OCI-LY7 (cell line): ENCODE measurements at regions of chr1 and their contacts with region 1.

Region 1: DNA sequence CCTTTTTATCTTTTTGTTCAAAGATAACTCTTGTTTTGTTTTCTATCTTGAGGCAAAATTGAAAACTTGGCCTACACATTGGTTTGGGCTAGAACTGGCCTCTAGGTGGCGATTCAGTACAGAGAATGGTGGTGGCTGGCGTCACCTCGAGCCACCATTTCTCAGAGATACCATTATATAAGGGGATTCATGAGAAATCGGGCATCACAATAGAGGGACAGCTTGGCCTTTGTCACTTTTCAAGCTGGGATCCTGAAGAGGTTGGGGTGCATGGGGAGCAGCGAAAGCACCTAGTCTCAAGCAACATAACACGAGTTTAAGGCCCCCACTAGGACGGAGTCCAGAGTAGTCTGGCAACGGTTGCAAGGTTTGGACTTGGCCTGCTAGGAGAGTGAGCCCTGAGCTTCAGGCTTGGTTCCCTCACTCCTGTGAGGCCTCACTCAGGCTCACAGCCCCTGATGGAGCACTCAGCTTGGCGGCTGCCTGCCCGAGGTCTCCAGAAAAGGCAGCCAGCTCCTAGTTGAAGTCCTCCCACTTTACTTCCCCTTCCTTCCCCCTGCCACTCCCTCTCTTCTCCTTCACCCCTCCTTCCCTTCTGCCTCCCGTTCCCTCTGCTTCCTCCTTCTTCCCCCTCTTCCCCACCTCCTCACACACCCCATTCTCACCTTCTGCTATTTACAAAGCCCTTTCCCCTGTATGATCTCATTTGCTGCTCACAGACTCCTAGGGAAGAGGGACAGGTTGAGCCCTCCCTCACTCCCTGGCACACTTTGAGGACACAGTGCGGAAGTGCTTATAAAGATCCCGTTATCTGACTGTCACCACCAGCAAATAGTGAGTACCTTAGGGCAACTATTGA is 67.8 kb downstream of the LRIG2 start:
- DNase-seq: peak; percentile 66
- H3K4me3 ChIP-seq: no peak overlapping the region
- H3K27ac ChIP-seq: no peak overlapping the region
- H3K4me1 ChIP-seq: no peaks in the 10 kb centered on the region
- CTCF ChIP-seq: peak; percentile 96

Region 2: DNA sequence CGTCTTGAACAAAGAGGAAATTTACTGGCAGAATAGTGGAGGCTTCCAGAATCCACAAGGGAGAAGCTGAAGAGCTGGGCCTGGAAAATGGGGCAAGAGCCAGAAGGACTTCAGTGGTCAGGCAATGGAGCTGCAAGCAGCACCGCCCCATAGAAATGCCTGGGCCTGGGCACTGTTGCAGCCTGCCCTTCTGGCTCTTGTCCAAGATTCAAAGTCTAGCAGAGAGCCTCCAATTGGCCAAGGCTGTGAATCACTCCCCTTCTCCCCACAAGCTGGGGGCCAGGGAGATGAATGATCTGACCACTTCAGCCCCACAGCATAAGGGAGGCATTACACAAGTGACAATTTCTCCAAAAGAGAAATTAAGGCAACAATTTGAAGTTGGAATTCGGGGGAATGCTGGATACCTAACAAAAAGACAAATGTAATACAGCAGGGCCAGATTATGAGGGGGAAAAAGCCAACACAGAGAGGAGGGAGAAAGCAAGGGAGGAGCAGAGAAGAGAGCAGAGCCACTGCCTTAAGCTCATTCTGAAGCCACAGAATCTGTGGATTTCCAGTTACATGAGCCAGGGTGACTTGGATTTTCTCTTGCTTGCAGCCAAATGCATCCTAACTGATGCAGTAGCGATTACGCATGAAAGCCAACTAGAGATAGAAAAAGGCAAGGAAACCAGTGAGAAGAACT is 12.4 kb after region 1 on chr1:
- CTCF ChIA-PET with region 1: no interaction called
- POLR2A ChIA-PET with region 1: no interaction called
- intact Hi-C with region 1: no loop called
- DNase-seq: no peak
- H3K4me3 ChIP-seq: no peak overlapping the region
- H3K27ac ChIP-seq: no peak overlapping the region
- H3K4me1 ChIP-seq: peaks cover 5% of the 10 kb centered on the region
- CTCF ChIP-seq: no peak

Region 3: GRCh38 chr1:113389953-113390834 is 249.4 kb after region 1 on chr1 and contains the start of gene MAGI3:
- CTCF ChIA-PET with region 1: no interaction called
- POLR2A ChIA-PET with region 1: no interaction called
- intact Hi-C with region 1: loop called (anchors 10 kb)
- DNase-seq: peak; percentile 94
- H3K4me3 ChIP-seq: peak within 1 kb of the TSS; percentile 85
- H3K27ac ChIP-seq: peak within 1 kb of the TSS; percentile 24
- H3K4me1 ChIP-seq: peaks cover 18% of the 10 kb centered on the region
- CTCF ChIP-seq: no peak
- total RNA-seq, gene MAGI3: 2.9 and 4.7 TPM in 2 replicates

Region 4: DNA sequence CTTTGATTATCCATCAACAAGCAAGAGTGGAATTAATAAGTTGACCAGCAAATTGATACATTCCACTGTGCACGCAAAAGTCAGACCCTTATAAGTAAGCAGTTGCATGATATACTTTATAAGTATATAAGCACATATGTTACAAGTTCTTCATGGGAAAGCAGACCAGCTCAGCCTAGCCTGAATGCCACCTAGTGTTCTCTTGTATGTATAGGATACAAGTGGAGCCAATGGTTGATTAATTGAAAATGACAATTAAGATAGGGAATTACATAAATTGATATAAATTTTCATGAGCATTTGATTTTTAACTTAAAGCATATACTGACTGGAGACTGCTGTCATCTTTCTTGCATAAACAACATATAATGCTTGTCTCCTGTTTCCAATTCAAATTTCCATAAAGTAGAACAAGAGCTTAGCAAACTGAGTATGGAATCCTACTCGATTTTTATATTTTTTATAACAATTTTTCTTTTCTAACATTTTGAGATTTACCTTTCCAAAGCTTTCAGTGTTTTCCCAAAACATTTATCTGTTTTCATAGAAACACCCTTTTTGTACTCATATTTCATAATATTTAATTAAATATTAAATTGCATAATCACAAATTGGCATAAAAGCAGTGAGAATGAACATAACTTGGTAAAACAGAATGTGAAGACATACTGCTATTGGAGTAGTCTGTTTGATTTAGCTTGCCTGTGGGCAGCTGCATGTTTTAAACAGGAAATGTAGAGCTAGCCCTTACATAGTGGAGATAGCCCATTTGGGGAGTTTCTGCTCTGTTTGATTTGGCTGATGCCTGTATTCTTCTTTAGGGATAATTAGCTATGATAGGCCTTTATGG is 312.3 kb after region 1 on chr1:
- CTCF ChIA-PET with region 1: no interaction called
- POLR2A ChIA-PET with region 1: no interaction called
- intact Hi-C with region 1: loop called (anchors 2 kb)
- DNase-seq: peak; percentile 32
- H3K4me3 ChIP-seq: no peak overlapping the region
- H3K27ac ChIP-seq: no peak overlapping the region
- H3K4me1 ChIP-seq: no peaks in the 10 kb centered on the region
- CTCF ChIP-seq: peak; percentile 73